RWPE1 (cell line): ENCODE measurements at regions of chr17 and their contacts with region 1.

Region 1: GRCh38 chr17:48307814-48308411 is 122.1 kb downstream of the SKAP1 start:
- DNase-seq: peak; percentile 49
- H3K27ac ChIP-seq: no peak overlapping the region
- CTCF ChIP-seq: peak; percentile 95

Region 2: GRCh38 chr17:48500966-48501426 is 193.1 kb after region 1 on chr17:
- CTCF ChIA-PET with region 1: no interaction called
- POLR2A ChIA-PET with region 1: no interaction called
- DNase-seq: no peak
- H3K27ac ChIP-seq: no peak overlapping the region
- CTCF ChIP-seq: no peak

Region 3: DNA sequence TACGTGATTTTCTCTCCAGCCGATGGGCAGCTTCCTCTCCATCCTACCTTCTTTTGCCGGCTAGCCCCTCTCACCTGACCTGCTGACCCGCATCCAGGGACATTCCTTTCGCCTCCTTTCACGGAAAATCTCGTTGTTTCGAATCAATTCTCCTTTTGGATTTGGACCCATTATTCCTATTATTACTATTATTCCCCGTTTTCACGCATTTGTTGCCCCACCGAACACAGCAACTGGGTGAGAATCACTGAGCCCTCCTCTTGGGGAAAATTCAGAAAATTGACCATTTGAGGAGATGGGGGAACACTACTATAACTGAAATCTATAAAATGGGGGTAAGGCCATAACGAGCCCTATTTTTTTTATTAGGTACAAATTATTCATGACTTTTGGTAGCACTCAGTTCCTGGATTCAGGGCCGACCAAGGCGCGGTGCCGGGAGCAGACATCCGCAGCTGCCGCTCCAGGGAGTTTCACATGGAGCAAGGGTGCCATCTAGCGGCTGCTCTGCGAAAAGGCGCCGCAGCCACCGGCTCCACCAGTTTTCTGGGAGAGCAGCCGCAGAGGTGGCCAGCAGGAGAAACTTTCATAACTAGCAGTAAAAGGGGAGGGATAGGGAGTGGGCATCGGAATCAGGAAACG is 310.5 kb after region 1 on chr17:
- CTCF ChIA-PET with region 1: interaction called, 10 read pairs
- POLR2A ChIA-PET with region 1: no interaction called
- DNase-seq: peak; percentile 91
- H3K27ac ChIP-seq: no peak overlapping the region
- CTCF ChIP-seq: peak; percentile 98